SK-N-SH (cell line): ENCODE measurements at regions of chr16 and their contacts with region 1.

Region 1: DNA sequence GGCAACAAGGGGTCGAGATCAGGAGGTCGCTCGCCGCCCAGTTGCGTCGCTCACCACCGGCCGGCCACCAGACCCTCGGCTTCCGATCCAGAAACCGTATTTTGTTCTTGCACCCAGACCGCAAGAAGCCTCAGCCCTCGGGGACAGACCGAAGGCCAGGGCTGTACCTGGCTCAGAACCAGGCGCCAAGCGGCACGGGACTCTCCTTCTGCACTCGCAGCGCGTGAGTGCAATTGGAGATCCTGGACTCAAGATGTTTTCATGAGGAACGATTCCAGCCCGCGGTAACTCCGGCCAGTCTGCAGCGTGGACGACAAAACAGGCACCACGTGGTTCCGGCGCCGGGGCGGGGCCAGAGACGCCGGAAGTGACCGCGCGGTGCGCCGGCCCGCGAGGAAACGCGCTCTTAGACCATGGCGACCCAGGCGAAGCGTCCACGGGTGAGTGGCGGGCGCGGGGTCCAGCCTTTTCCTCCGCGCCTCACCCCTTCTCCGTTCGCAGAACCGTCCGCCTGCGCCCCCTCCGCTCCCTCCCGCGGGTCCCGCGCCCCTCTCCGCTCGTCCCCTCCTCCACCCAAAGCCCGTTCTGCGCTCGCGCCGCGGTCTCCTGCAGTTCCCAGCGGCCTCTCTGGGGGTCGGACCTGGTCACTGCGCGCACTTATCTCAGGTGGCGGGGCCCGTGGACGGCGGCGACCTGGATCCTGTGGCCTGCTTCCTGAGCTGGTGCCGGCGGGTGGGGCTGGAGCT is at the start of gene SETD6:
- DNase-seq: peak; percentile 92
- H3K4me3 ChIP-seq: peak within 1 kb of the TSS; percentile 65 to 82
- H3K27ac ChIP-seq: peak within 1 kb of the TSS; percentile 43 to 80; a peak in 3 of 4 replicates
- H3K4me1 ChIP-seq: peaks cover 0 to 10% of the 10 kb centered on the region in 2 experiments; a peak in 1 of 4 replicates
- H3K27me3 ChIP-seq: no peaks in the 10 kb centered on the region
- CTCF ChIP-seq: no peak
- EP300 ChIP-seq: no peak
- RAD21 ChIP-seq: no peak
- polyA plus RNA-seq, gene SETD6: 17.2 and 22.2 TPM in 2 replicates

Region 2: DNA sequence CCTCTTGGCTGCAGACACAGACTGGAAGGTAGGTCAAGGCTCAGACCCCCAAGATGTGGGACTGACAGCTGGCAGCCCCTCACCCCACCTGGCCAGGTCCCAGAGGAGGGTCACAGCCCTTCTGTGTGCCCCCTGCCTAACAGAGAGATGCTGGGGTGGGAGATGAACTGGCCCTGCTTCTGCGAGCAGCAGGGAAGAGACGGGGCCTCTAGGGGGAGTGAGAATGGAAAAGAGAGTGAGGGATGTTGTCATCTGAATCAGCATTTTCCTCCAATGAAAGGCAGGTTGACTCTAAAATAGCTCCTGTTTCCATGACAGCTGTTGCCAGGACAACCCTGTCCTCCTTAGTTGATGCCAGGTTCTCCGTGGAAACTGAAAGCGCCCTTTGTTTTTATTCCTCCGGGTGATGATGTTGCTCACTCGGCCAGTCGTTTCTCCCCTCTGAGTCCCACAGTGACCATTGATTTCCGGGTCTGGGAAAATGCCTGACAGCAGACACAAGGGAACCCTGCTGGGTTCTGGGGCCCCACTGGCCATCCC is 20.2 kb before region 1 on chr16:
- CTCF ChIA-PET with region 1: interaction called, 32 read pairs
- POLR2A ChIA-PET with region 1: interaction called, 8 read pairs
- DNase-seq: peak; percentile 93
- H3K4me3 ChIP-seq: peak overlapping the region; percentile 23 to 34; a peak in 2 of 4 replicates
- H3K27ac ChIP-seq: peak overlapping the region; percentile 86 to 97
- H3K4me1 ChIP-seq: peaks cover 6 to 37% of the 10 kb centered on the region in 2 experiments; a peak in 2 of 4 replicates
- H3K27me3 ChIP-seq: no peaks in the 10 kb centered on the region
- CTCF ChIP-seq: peak; percentile 69
- EP300 ChIP-seq: peak; percentile 17 to 38; a peak in 2 of 4 replicates
- RAD21 ChIP-seq: peak; percentile 43

Region 3: DNA sequence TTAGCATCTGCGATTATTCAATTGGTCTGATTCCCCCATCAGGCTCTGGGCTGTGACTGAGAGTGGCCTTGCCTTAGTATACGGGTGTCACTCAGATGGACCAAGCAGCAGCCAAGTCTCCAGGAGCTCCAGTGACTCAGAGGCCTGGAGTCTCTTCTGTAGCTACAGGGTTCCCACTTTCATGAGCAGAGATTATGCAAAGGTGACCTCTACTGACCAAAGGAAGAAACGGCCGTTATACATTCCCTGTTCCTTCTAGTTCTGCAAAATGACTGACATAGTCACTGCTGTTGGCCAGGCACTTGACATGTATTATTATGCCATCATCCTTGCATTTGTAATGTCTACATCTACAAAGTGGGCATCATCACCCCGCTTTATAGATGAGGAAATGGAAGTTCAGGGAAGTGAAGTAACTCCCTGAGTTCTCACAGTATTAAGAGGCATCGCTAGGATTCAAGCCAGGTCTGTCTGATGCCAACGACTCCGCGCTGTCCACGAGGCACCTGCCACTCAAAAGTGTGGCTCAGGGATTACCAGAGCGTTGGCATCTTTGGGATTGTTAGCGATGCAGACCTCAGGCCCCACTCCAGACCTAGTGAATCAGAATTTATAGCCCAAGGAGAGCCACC is 146.0 kb after region 1 on chr16:
- CTCF ChIA-PET with region 1: interaction called, 62 read pairs
- POLR2A ChIA-PET with region 1: interaction called, 3 read pairs
- DNase-seq: peak; percentile 78
- H3K4me3 ChIP-seq: no peak overlapping the region; a peak in 1 of 4 replicates
- H3K27ac ChIP-seq: no peak overlapping the region
- H3K4me1 ChIP-seq: peaks cover 3 to 18% of the 10 kb centered on the region in 2 experiments; a peak in 1 of 4 replicates
- H3K27me3 ChIP-seq: no peaks in the 10 kb centered on the region
- CTCF ChIP-seq: peak; percentile 78
- EP300 ChIP-seq: no peak
- RAD21 ChIP-seq: peak; percentile 98